ENCODE measurements at regions of chr12 and their contacts with region 1.

Region 1: GRCh38 chr12:132489602-132490239 is at the start of gene FBRSL1:
- DNase-seq: peak; percentile 83
- ATAC-seq: peak; percentile 82
- H3K4me3 Mint-ChIP-seq: peak within 1 kb of the TSS; percentile 84
- H3K27ac Mint-ChIP-seq: peak within 1 kb of the TSS; percentile 92
- H3K4me1 Mint-ChIP-seq: peaks cover 64% of the 10 kb centered on the region
- H3K27me3 Mint-ChIP-seq: no peaks in the 10 kb centered on the region
- CTCF ChIP-seq: no peak
- total RNA-seq, gene FBRSL1: 50.3 and 58.7 TPM in 2 replicates

Region 2: GRCh38 chr12:132083941-132084620 is 405.6 kb before region 1 on chr12:
- CTCF ChIA-PET with region 1: no interaction called
- POLR2A ChIA-PET with region 1: no interaction called
- intact Hi-C with region 1: loop called (anchors 5 kb)
- DNase-seq: peak; percentile 88
- ATAC-seq: peak; percentile 93
- H3K4me3 Mint-ChIP-seq: peak overlapping the region; percentile 90
- H3K27ac Mint-ChIP-seq: peak overlapping the region; percentile 88
- H3K4me1 Mint-ChIP-seq: peaks cover 22% of the 10 kb centered on the region
- H3K27me3 Mint-ChIP-seq: no peaks in the 10 kb centered on the region
- CTCF ChIP-seq: no peak

Region 3: GRCh38 chr12:132407451-132407961 is 82.2 kb before region 1 on chr12:
- CTCF ChIA-PET with region 1: no interaction called
- POLR2A ChIA-PET with region 1: no interaction called
- intact Hi-C with region 1: no loop called
- DNase-seq: no peak
- ATAC-seq: no peak
- H3K4me3 Mint-ChIP-seq: no peak overlapping the region
- H3K27ac Mint-ChIP-seq: no peak overlapping the region
- H3K4me1 Mint-ChIP-seq: no peaks in the 10 kb centered on the region
- H3K27me3 Mint-ChIP-seq: peaks cover 4% of the 10 kb centered on the region
- CTCF ChIP-seq: no peak

Region 4: DNA sequence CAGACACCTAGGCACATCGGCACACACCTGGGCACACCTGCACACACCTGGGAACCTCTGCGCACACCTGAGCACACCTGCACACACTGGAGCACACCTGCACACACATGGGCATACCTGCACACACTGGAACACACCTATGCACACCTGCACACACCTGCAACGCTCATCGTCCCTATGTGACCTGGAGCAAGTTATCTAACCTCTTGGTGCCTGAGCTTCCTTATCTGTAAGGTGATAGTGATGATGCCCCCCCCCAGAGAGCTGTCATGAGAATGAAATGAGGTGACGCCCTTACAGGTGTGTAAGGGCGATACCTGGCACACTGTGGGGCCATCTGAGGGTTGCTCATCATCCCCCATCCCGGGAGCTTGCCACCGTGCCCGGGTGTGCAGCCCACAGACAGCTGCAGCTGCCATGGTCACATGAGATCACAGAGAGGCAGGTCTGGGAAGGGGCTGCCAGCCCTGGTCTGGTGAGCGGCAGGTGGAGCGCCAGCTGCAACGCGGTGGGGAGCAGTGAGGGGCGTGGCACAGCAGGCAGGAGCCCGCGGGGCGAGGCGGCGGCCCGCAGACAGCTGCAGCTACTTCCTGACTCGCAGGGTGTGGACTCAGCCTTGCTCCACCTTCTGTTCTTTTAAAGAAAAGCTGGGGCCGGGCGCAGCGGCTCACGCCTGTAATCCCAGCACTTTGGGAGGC is 59.6 kb before region 1 on chr12:
- CTCF ChIA-PET with region 1: interaction called, 4 read pairs
- POLR2A ChIA-PET with region 1: interaction called, 7 read pairs
- intact Hi-C with region 1: loop called (anchors 1 kb)
- DNase-seq: peak; percentile 60
- ATAC-seq: peak; percentile 87
- H3K4me3 Mint-ChIP-seq: peak overlapping the region; percentile 60
- H3K27ac Mint-ChIP-seq: peak overlapping the region; percentile 30
- H3K4me1 Mint-ChIP-seq: peaks cover 61% of the 10 kb centered on the region
- H3K27me3 Mint-ChIP-seq: no peaks in the 10 kb centered on the region
- CTCF ChIP-seq: no peak

Region 5: DNA sequence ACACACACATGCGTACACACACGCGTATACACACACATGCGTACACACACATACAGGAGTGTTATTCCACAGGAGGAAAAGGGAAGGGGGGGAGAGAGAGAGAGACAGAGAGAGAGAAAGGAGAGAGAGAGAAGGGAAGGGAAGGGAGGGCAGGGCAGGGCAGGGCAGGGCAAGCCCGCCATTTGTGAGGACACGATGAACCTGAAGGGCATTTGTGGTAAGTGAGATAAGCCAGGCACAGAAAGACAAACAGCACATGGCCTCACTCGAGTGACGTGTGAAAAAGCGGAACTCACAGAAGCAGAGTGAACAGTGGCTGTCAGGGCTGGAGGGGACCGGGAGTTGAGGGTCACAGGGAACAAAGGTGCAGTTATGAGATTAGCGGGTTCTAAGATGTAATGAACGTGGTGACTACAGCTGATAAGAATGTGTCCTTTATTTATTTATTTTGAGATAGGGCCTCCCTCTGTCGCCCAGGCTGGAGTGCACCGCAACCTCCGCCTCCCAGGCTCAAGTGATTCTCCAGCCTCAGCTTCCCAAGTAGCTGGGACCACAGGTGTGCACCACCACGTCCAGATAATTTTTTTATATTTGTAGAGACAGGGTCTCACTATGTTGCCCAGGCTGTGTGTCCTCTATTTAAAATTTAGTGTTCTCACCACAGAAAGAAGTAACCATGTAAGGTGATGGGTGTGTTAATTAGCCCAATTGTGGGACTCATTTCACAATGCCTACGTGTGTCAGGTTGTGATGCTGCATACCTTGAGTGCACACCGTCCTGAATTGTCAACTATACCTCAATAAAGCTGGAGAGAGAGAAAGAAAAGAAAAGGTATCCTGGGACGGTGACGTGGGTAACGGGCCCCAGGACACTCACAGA is 18.5 kb before region 1 on chr12:
- CTCF ChIA-PET with region 1: no interaction called
- POLR2A ChIA-PET with region 1: interaction called, 11 read pairs
- intact Hi-C with region 1: loop called (anchors 1 kb)
- DNase-seq: no peak
- ATAC-seq: peak; percentile 74
- H3K4me3 Mint-ChIP-seq: peak overlapping the region; percentile 55
- H3K27ac Mint-ChIP-seq: peak overlapping the region; percentile 78
- H3K4me1 Mint-ChIP-seq: peaks cover 65% of the 10 kb centered on the region
- H3K27me3 Mint-ChIP-seq: no peaks in the 10 kb centered on the region
- CTCF ChIP-seq: no peak

Region 6: DNA sequence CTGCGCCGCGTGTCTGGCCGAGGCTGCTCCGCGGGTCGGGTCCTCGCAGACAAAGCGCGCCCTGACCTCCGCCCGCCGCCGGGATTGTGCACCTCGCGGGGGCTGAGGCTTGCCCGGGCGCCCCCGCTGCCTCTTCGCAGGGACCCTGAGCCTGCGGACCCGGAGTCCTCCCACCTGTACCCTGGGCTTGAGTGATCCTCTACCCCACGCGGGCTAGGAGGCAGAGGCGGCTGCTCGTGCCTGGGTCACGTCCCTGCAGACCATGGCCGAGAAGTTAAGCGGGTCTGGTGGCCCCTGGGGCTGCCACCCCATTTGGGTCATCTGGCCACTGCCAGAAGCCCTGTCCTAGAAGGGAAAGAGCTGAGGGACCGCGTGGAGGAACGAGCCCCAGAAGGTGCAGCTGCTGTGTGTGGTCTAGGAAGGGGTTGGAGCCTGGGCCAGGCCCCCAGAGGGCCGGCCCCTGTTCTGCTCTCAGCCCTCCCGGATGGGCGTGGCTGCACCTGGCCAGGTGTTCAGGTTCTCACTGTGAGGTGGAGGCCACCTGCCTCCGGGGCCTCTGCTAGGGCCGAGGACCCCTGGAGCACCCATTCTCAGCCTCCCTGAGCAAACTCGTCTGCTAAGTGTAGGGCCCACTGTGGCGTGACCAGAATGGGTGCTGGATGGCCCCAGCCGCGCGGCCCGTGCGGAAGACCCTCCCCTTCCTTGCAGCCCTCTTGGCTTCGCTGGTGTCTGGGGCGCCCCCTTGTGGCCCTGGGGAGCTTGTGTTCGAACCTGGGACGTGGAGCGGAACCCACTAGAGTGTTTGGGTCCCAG is 71.1 kb after region 1 on chr12:
- CTCF ChIA-PET with region 1: no interaction called
- POLR2A ChIA-PET with region 1: no interaction called
- intact Hi-C with region 1: loop called (anchors 1 kb)
- DNase-seq: peak; percentile 75
- ATAC-seq: peak; percentile 69
- H3K4me3 Mint-ChIP-seq: peak overlapping the region; percentile 77
- H3K27ac Mint-ChIP-seq: no peak overlapping the region
- H3K4me1 Mint-ChIP-seq: peaks cover 21% of the 10 kb centered on the region
- H3K27me3 Mint-ChIP-seq: no peaks in the 10 kb centered on the region
- CTCF ChIP-seq: peak; percentile 35

Region 7: DNA sequence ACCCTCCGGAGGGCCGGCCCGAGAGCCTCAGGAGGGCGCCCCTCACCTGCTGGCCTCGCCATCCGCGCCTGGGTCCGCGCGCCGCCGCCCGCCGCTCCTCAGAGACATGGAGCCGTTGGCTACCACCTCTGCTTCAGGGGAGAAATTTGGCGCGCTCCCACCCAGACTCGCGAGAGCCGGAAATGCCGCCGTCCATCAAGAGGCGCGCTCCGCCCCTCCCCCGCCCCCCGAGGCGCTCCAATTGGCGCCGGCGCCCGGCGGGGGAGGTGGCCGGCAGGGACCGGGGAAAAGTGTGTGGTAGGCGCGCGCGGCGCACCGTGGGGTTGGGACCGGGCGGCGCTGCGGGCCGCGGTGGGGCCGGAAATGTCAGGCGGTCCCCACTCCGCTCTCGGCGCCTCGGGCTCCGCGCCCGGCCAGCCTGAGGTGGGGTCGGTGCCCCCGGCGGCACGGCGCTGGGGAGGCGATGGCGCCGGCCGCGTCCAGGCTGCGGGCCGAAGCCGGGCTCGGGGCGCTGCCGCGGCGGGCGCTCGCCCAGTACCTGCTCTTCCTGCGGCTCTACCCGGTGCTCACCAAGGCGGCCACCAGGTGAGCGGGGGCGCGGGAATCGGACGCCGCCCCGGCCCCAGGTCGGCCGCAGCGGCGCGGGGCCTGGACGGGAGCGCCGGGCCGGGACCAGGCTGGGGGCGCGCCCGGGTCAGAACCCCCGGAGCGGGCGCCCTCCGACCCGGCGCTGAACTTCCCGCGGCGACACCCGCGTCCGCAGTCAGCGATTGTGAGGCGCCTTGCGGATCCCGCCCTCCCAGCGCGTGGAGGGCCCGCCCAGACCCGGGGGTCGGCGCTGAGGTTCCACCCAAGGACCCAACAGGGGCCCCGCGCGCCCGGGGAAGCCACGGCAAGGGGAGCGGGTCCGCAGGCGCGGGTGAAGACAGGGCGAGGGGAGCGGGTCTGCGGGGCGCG is 197.8 kb after region 1 on chr12 and contains the starts of genes POLE and PXMP2:
- CTCF ChIA-PET with region 1: no interaction called
- POLR2A ChIA-PET with region 1: no interaction called
- intact Hi-C with region 1: loop called (anchors 1 kb)
- DNase-seq: peak; percentile 91
- ATAC-seq: peak; percentile 95
- H3K4me3 Mint-ChIP-seq: peak within 1 kb of the TSS; percentile 83
- H3K27ac Mint-ChIP-seq: no peak within 1 kb of the TSS
- H3K4me1 Mint-ChIP-seq: peaks cover 16% of the 10 kb centered on the region
- H3K27me3 Mint-ChIP-seq: no peaks in the 10 kb centered on the region
- CTCF ChIP-seq: no peak
- total RNA-seq, gene POLE: 51.1 and 64.3 TPM in 2 replicates
- total RNA-seq, gene PXMP2: 5.3 and 7.7 TPM in 2 replicates

Measured in activated B cell treated with CpG ODN at 0.5 μM for 24 hours (primary cell).